ENCODE measurements at regions of chr18 and their contacts with region 1.

Region 1: DNA sequence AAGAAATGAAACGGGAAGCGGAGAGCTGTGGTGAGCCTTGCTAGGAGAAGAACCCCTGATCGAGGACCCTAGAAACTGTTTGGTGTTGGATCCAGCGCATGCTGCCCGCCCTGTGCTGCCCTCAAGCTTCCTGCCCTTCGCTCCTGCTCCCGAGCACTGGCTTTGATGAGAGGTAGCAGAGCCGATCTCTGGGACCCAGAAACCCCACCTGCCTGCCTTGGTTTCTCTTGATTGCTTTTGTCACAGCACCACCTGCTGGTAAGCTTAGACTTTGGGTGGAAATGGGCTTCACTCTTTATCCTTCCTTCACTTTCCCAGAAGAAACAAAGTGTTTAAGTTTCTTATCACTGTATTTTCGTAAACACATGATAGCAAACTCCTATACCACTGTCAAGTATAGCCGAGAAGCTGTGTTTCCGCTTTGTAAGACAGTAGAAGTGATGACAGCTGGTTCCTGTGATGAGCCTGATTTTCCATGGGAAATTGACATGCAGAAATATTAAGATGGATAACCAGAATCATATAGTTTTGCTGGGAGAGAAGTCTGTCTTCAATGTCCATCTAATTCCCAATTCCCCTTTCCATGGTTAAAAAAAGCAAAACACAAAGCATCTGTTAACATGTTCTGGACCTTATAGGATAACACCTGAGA is 267.4 kb downstream of the PHLPP1 start:
- DNase-seq: peak in 4 of 5 donors; percentile 69 to 90 (median 79)
- H3K4me3 ChIP-seq: peak overlapping the region; percentile 2 to 53 (median 35)
- H3K27ac ChIP-seq: no peak overlapping the region
- H3K4me1 ChIP-seq: peaks cover 0 to 3% (median 0%) of the 10 kb centered on the region in 3 donors
- H3K27me3 ChIP-seq: no peaks in the 10 kb centered on the region
- CTCF ChIP-seq: peak; percentile 77

Region 2: DNA sequence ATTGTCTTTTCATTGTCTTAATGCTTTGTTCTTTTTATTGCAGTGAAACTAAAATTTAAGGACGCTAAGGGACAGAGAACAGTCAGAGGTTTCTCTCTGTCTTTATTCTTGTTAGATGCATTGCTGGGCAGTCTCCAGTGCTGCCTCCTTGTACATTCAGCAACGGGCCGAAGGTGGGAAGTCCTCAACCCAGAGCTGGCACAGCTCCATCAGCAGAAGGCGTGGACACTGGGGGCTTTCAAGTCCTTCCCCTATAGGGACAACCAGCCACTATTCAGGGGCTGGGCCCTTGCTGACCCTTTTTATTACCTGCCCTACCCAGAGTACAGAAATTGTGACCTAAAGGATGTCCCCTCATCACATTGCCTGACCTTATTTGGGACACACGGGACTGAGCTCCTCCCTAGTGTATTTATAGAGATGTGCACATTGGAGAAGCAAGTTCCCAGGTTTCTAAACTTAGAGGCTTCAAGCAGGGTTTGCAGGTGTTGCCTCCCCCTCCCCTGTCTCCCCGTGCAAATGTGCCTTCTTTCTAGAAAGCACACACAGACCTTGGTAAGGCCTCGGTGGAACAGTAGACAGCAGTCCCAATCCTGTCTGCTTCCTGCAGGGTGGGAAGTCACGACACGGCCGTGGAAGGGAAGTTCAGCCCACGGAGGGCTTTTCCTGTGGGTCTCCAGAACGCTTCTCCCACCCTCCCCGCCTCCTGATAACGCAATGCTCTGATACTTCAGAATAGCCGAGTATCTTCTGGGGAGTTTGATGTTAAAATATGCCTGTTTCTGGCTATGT is 391.7 kb before region 1 on chr18:
- intact Hi-C with region 1: loop called (anchors 5 kb)
- DNase-seq: no peak
- H3K4me3 ChIP-seq: no peak overlapping the region
- H3K27ac ChIP-seq: no peak overlapping the region
- H3K4me1 ChIP-seq: peaks cover 0 to 5% (median 0%) of the 10 kb centered on the region in 3 donors
- H3K27me3 ChIP-seq: no peaks in the 10 kb centered on the region
- CTCF ChIP-seq: no peak

Region 3: DNA sequence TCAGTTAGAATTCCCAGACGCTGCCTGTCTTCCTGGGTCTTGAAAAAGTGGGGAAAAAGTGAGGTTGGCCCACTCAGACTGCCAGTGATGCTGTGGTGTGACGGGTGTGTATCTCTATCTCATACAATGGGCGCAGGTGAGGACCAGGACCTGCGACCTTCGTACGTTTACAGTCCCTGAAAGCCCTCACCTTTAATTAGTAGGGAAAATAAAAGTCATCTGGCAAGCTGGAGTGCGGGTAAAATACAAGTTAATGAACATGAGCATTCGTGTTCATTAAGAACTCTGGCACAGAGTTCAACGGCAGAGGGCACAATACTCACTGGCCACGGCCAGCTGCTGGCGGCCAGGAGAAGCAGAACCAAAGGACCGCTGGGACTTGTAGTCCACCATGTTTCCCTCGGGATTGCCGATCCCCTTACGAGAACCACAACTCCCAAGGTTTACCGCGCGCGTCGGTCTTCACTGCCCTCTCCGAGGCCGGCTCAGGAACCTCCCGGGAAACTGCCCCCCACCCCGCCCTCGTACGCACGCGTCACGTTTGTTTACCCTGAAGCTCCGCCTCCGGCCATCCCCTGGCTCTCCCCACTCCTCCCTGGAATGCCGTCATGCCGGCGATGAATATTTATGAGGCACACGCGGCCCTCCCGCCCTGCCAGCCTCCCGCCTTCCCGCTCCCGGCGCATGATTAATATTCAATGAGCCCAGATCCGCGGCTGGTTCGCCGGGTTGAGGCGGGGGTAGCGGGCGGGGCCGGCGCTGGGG is 267.9 kb before region 1 on chr18:
- intact Hi-C with region 1: loop called (anchors 10 kb)
- DNase-seq: peak; percentile 100
- H3K4me3 ChIP-seq: peak overlapping the region; percentile 59 to 66 (median 62)
- H3K27ac ChIP-seq: peak overlapping the region; percentile 95 to 98
- H3K4me1 ChIP-seq: peaks cover 3 to 9% (median 7%) of the 10 kb centered on the region in 3 donors
- H3K27me3 ChIP-seq: no peaks in the 10 kb centered on the region
- CTCF ChIP-seq: peak; percentile 88

Region 4: GRCh38 chr18:63040788-63041410 is 58.2 kb after region 1 on chr18:
- intact Hi-C with region 1: no loop called
- DNase-seq: no peak
- H3K4me3 ChIP-seq: no peak overlapping the region
- H3K27ac ChIP-seq: no peak overlapping the region
- H3K4me1 ChIP-seq: no peaks in the 10 kb centered on the region
- H3K27me3 ChIP-seq: no peaks in the 10 kb centered on the region
- CTCF ChIP-seq: no peak